CD8-positive, alpha-beta memory T cell (primary cell): ENCODE measurements at regions of chr6 and their contacts with region 1.

Region 1: GRCh38 chr6:44475779-44476434 is 88.4 kb downstream of the CDC5L start:
- DNase-seq: peak; percentile 35 to 67 (median 40)
- H3K4me3 ChIP-seq: no peak overlapping the region
- H3K4me3 Mint-ChIP-seq: peak overlapping the region in 1 of 7 donors; percentile 74
- H3K27ac ChIP-seq: no peak overlapping the region
- H3K27ac Mint-ChIP-seq: no peak overlapping the region
- H3K4me1 ChIP-seq: peaks cover 8% of the 10 kb centered on the region
- H3K4me1 Mint-ChIP-seq: peaks cover 0 to 2% (median 0%) of the 10 kb centered on the region in 3 donors
- H3K27me3 ChIP-seq: no peaks in the 10 kb centered on the region
- H3K27me3 Mint-ChIP-seq: peaks cover 6 to 19% of the 10 kb centered on the region in 2 donors

Region 2: GRCh38 chr6:44456070-44456965 is 19.6 kb before region 1 on chr6:
- CTCF ChIA-PET with region 1: interaction called, 12 read pairs
- POLR2A ChIA-PET with region 1: no interaction called
- DNase-seq: peak in 3 of 5 donors; percentile 20 to 33 (median 26)
- H3K4me3 ChIP-seq: no peak overlapping the region
- H3K4me3 Mint-ChIP-seq: no peak overlapping the region
- H3K27ac ChIP-seq: no peak overlapping the region
- H3K27ac Mint-ChIP-seq: no peak overlapping the region
- H3K4me1 ChIP-seq: no peaks in the 10 kb centered on the region
- H3K4me1 Mint-ChIP-seq: no peaks in the 10 kb centered on the region
- H3K27me3 ChIP-seq: no peaks in the 10 kb centered on the region
- H3K27me3 Mint-ChIP-seq: peaks cover 2 to 9% of the 10 kb centered on the region in 2 donors

Region 3: DNA sequence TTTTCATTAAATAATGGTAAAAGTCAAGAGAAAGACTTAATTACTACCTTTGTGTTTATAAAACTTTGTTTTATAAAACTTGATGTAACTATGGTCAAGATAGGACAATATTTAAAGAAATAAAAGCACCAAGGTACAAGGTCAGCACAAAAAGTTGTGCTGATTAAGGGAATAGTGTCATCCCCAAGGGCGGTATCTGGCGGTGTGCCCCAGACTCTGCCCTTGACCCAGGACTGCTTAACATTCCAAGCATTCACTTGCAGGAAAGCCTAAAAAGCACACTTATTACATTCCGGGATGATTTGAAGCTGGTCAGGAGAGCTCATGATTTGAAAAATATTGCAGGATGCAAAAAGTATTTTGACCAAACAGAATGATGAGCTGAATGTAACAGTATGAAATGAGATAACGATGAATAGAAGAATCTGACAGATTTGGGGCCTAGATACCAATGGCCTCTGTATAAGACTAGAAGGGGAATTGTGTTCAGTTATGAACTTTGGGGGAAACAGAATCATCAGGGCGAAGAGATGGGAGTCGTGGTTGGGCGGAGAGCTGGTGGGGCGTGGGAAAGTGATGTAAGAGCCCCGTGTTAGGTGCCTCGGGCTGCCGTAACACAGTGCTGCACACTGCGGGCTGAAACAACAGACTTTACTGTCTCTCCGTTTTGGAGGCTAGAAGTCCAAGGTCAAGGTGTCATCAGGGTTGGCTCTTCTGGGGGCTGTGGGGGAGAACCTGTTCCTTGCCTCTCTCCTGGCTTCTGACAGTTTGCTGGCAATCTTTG is 11.2 kb before region 1 on chr6:
- CTCF ChIA-PET with region 1: interaction called, 18 read pairs
- POLR2A ChIA-PET with region 1: no interaction called
- DNase-seq: no peak
- H3K4me3 ChIP-seq: no peak overlapping the region
- H3K4me3 Mint-ChIP-seq: no peak overlapping the region
- H3K27ac ChIP-seq: no peak overlapping the region
- H3K27ac Mint-ChIP-seq: no peak overlapping the region
- H3K4me1 ChIP-seq: no peaks in the 10 kb centered on the region
- H3K4me1 Mint-ChIP-seq: peaks cover 0 to 11% (median 5%) of the 10 kb centered on the region in 3 donors
- H3K27me3 ChIP-seq: no peaks in the 10 kb centered on the region
- H3K27me3 Mint-ChIP-seq: peaks cover 2 to 21% of the 10 kb centered on the region in 2 donors

Region 4: GRCh38 chr6:45714741-45715507 is 1239.0 kb after region 1 on chr6:
- CTCF ChIA-PET with region 1: interaction called, 14 read pairs
- POLR2A ChIA-PET with region 1: no interaction called
- DNase-seq: peak; percentile 8 to 65 (median 57)
- H3K4me3 ChIP-seq: no peak overlapping the region
- H3K4me3 Mint-ChIP-seq: peak overlapping the region in 6 of 7 donors; percentile 35 to 67 (median 58)
- H3K27ac ChIP-seq: no peak overlapping the region
- H3K27ac Mint-ChIP-seq: peak overlapping the region in 3 of 8 donors; percentile 35 to 49 (median 42)
- H3K4me1 ChIP-seq: peaks cover 5% of the 10 kb centered on the region
- H3K4me1 Mint-ChIP-seq: peaks cover 10 to 29% (median 23%) of the 10 kb centered on the region in 3 donors
- H3K27me3 ChIP-seq: no peaks in the 10 kb centered on the region
- H3K27me3 Mint-ChIP-seq: peaks cover 0 to 7% of the 10 kb centered on the region in 2 donors

Region 5: GRCh38 chr6:45922728-45923351 is 1446.9 kb after region 1 on chr6:
- CTCF ChIA-PET with region 1: interaction called, 26 read pairs
- POLR2A ChIA-PET with region 1: no interaction called
- DNase-seq: peak; percentile 16 to 63 (median 34)
- H3K4me3 ChIP-seq: no peak overlapping the region
- H3K4me3 Mint-ChIP-seq: peak overlapping the region in 1 of 7 donors; percentile 4
- H3K27ac ChIP-seq: no peak overlapping the region
- H3K27ac Mint-ChIP-seq: peak overlapping the region in 1 of 8 donors; percentile 32
- H3K4me1 ChIP-seq: no peaks in the 10 kb centered on the region
- H3K4me1 Mint-ChIP-seq: peaks cover 5 to 19% (median 11%) of the 10 kb centered on the region in 3 donors
- H3K27me3 ChIP-seq: no peaks in the 10 kb centered on the region
- H3K27me3 Mint-ChIP-seq: no peaks in the 10 kb centered on the region